Activated CD4-positive, alpha-beta T cell treated with anti-CD3 and anti-CD28 coated beads for 36 hours (primary cell): ENCODE measurements at regions of chr12 and their contacts with region 1.

Region 1: DNA sequence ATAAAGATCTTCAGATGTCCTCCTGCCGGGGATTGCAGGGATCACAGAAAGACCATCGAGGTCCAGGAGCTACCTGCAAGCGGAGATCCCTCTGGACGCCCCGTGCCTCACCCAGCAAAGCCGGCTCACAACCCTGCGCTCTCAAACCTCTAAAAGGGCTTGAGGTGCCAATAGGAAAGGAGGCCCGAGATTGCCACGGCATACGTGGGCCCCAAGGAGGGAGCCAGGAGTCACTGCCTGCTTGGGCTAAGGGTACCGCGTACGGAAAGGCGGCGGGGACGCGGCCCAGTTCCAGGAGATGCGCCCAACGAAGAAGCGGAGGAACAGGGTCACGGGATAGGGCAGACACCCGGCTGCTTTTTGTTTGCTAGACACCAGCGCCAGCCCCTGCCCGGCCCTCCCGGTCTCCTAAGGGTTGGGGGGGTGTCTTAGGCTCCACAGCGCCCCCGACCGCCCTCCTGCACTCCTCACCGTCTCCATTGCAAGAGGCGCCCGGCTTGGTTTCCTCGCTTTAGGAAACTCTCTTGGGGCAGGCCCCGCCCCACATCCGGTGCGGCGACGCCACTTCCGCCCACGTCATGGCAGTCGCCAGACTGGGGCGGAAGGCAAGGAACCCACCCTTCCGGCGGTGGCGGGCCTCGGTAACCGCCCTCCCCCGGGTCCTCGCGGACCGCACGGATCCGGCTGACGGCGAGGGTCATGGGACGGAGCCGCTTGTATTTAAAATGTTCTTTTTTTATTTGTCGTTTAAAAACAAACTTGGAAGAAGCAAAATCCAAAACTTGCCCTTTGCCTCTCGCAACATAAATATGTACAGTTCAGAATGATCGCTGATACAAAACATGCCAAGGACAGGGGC is at the start of gene PRKAG1:
- DNase-seq: peak; percentile 97
- ATAC-seq: peak; percentile 87
- H3K4me3 Mint-ChIP-seq: peak within 1 kb of the TSS; percentile 81
- H3K27ac Mint-ChIP-seq: peak within 1 kb of the TSS; percentile 97
- H3K4me1 Mint-ChIP-seq: peaks cover 34% of the 10 kb centered on the region
- H3K27me3 Mint-ChIP-seq: no peaks in the 10 kb centered on the region
- total RNA-seq, gene PRKAG1: 54.5 to 62.6 TPM

Region 2: GRCh38 chr12:48851883-48852733 is 166.4 kb before region 1 on chr12 and contains the start of gene DDX23:
- CTCF ChIA-PET with region 1: interaction called, 11 read pairs
- POLR2A ChIA-PET with region 1: interaction called, 3 read pairs
- intact Hi-C with region 1: loop called in 1 of 2 experiments (anchors 1 kb)
- DNase-seq: peak; percentile 96
- ATAC-seq: peak; percentile 97
- H3K4me3 Mint-ChIP-seq: peak within 1 kb of the TSS; percentile 96
- H3K27ac Mint-ChIP-seq: peak within 1 kb of the TSS; percentile 99
- H3K4me1 Mint-ChIP-seq: peaks cover 30% of the 10 kb centered on the region
- H3K27me3 Mint-ChIP-seq: no peaks in the 10 kb centered on the region
- total RNA-seq, gene DDX23: 115 to 120 TPM

Region 3: GRCh38 chr12:48995061-48995879 is 23.2 kb before region 1 on chr12:
- CTCF ChIA-PET with region 1: interaction called, 20 read pairs
- POLR2A ChIA-PET with region 1: interaction called, 4 read pairs
- intact Hi-C with region 1: loop called (anchors 1 to 2 kb)
- DNase-seq: peak; percentile 77
- ATAC-seq: peak; percentile 13
- H3K4me3 Mint-ChIP-seq: no peak overlapping the region
- H3K27ac Mint-ChIP-seq: no peak overlapping the region
- H3K4me1 Mint-ChIP-seq: peaks cover 26% of the 10 kb centered on the region
- H3K27me3 Mint-ChIP-seq: peaks cover 52% of the 10 kb centered on the region

Region 4: DNA sequence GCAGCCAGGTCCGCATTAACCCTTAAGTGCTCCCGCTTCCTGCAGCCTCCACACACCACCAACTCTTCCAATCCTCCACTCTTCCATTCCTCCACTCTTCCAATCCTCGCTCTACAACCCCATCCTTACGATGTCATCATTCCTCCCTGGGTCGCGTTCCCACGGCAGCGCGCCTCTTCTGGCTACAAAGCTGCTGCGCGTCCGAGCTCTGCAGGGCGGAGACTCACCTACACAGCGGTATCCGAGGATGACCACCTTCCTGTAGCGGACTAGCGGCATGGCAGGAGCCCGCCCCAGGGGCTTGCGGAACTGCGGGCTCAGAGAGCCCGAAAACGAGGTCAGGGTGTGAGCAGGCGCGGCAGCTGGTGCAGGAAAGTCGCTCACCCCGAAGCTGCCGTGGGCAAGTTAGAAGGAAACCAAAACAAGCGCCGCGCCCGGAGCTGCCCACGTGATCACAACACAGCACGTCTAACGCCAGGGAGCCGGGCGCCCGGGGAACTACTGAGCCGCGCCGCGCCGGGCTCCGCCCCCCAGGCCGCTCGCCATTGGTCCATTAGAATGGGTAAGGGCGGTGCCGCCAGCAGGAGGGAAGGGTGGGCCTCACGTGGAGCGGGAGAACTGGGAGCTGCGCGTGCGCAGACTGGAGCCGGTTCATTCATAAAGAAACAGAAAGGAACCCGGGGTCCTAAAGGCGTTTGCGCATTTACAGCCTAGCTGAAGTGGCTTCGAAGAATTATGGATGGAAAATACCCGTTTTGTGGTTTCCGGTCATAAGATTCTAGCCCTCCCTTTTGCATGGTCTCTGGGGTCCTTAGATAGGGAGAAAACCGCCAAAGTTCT is 51.2 kb after region 1 on chr12 and contains the start of gene RHEBL1:
- CTCF ChIA-PET with region 1: interaction called, 5 read pairs
- POLR2A ChIA-PET with region 1: no interaction called
- intact Hi-C with region 1: loop called in 1 of 2 experiments (anchors 1 kb)
- DNase-seq: peak; percentile 100
- ATAC-seq: peak; percentile 100
- H3K4me3 Mint-ChIP-seq: peak within 1 kb of the TSS; percentile 94
- H3K27ac Mint-ChIP-seq: peak within 1 kb of the TSS; percentile 91
- H3K4me1 Mint-ChIP-seq: peaks cover 15% of the 10 kb centered on the region
- H3K27me3 Mint-ChIP-seq: no peaks in the 10 kb centered on the region
- total RNA-seq, gene RHEBL1: 6.7 to 13.3 TPM

Region 5: DNA sequence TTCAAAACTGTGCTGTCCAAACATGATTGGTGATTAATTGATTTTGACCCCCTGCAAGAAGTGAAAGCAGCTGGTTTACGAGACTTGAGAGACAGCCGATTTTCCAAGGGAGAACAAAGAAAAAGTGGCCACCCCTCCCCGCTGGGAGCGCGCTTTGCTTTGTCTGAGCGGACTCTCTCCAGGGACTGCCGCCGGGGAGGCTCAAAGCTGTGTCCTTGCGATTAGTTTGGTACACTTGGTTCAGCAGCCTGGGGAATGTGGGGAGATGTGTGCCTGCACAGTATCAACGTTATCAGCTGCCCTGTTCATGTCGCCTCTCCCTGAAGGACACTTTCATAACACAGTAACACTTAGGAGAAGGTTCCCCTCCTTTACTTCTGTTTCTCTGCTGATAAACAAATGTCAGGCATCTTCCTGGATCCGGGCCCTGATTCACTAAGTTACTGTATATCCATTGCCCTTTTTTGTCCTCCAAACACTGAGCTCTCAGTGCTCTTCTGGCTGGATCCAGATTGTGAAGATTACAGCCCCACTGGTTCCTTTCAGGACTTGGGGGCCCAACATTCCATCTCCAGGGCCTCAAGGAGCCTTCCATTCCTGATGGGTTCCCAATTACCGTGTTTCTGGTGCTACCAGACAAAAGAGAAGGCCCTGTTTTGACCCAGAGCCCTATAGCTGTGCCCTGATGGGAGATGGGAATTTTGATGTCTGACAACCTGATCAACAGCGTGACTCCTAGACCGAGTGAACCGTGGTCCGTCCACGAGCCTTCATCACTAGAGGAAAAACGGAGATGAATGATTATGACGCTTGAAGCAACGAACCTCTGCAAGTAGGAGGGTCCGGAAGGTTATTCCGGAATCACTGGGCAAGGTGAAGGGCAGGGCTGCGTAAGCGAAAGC is 214.7 kb after region 1 on chr12:
- CTCF ChIA-PET with region 1: interaction called, 4 read pairs
- POLR2A ChIA-PET with region 1: no interaction called
- intact Hi-C with region 1: loop called in 1 of 2 experiments (anchors 2 kb)
- DNase-seq: no peak
- ATAC-seq: no peak
- H3K4me3 Mint-ChIP-seq: peak overlapping the region; percentile 76
- H3K27ac Mint-ChIP-seq: peak overlapping the region; percentile 83
- H3K4me1 Mint-ChIP-seq: peaks cover 20% of the 10 kb centered on the region
- H3K27me3 Mint-ChIP-seq: no peaks in the 10 kb centered on the region

Region 6: DNA sequence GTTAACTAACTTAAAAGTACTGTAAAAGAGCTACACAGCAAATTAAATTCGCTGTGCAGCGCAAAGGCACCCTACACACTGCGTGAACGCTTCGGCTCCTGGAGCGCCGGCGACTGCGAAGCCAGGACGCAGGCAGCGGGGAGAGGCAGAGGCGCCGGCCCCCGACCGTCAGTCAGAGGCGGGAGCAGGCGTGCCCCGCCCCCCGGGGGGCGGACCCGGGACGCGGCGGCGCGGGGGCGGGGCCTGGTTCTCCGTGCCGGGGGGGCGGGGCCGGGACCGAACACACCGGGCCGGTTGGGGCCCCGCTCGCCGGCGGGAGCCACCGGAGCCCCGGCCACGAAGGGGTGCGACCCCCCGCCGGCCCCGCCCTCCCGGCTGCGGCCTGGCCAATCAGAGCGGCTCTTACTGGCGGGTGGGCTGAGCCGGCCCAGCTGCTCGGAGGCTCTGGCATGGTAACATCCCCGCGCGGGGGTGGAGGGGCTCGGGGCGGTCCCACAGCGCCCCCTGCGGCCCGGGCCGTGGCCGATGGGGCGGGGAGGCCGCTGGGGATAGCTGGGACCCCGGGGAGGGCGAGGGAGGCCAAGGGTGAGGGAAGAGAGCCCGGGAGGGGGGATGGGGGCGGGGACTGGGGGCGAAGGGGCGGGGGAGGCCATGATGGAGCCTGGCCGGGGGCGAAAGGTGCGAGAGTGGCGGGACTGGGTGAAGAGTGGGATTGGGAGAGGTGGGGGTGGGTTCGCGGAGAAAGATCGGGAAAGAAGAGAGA is 604.8 kb after region 1 on chr12 and contains the start of gene PRPF40B:
- CTCF ChIA-PET with region 1: no interaction called
- POLR2A ChIA-PET with region 1: no interaction called
- intact Hi-C with region 1: loop called in 1 of 2 experiments (anchors 5 kb)
- DNase-seq: peak; percentile 92
- ATAC-seq: peak; percentile 76
- H3K4me3 Mint-ChIP-seq: peak within 1 kb of the TSS; percentile 72
- H3K27ac Mint-ChIP-seq: peak within 1 kb of the TSS; percentile 86
- H3K4me1 Mint-ChIP-seq: peaks cover 31% of the 10 kb centered on the region
- H3K27me3 Mint-ChIP-seq: peaks cover 11% of the 10 kb centered on the region
- total RNA-seq, gene PRPF40B: 6.9 to 8.1 TPM

Region 7: DNA sequence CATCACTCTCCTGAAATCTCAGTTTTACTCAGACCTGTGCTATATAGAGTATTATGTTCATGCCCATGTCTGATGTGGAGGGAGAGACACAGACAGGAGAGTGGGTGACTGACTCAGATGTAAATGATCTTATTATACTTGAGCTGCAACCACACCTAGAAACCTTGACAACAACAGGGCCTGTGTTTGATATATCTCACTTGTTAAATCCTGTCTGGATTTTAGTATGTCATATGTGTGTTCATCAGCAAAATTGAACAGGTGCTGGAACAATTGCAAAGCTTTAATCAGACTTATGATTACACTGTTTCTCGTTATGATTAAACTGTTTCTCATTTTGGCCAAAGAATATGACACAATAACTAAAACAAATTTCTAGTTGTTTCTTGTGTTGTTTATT is 1524.0 kb after region 1 on chr12:
- CTCF ChIA-PET with region 1: no interaction called
- POLR2A ChIA-PET with region 1: no interaction called
- intact Hi-C with region 1: no loop called
- DNase-seq: peak; percentile 59
- ATAC-seq: peak; percentile 98
- H3K4me3 Mint-ChIP-seq: no peak overlapping the region
- H3K27ac Mint-ChIP-seq: peak overlapping the region; percentile 92
- H3K4me1 Mint-ChIP-seq: peaks cover 61% of the 10 kb centered on the region
- H3K27me3 Mint-ChIP-seq: no peaks in the 10 kb centered on the region